ENCODE measurements at regions of chr10 and their contacts with region 1.

Region 1: DNA sequence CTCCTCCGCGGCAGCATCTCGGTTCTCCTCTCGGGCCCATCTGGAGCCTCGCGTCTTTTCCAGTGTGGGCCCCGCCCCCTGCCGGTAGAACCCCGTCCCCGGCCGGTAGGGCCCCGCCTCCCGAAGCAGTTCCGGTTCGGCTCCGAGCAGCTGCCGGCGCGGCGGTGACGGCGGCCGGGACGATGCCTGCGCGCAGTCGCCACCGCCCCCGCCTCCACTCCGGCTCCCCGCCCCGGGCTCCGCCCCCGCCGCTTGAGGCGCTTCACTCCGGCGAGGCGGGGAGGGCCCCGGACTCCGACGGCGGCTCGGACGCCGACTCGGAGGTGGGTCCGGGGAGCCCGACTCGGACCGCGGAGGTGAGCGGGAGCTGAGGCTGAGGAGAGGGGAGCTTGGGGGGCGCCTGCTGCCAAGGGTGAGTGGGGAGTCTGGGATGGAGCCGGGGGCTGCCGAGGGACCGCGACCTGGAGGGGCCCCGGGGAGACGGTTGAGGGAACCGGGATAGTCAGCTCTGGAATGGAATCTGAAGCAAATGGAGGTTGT is at the start of gene SAMD8:
- DNase-seq: peak; percentile 98
- ATAC-seq: peak; percentile 91
- total RNA-seq, gene SAMD8: 21.9 to 23.8 TPM

Region 2: GRCh38 chr10:74651565-74651964 is 459.9 kb before region 1 on chr10:
- intact Hi-C with region 1: no loop called
- DNase-seq: no peak
- ATAC-seq: no peak

Region 3: DNA sequence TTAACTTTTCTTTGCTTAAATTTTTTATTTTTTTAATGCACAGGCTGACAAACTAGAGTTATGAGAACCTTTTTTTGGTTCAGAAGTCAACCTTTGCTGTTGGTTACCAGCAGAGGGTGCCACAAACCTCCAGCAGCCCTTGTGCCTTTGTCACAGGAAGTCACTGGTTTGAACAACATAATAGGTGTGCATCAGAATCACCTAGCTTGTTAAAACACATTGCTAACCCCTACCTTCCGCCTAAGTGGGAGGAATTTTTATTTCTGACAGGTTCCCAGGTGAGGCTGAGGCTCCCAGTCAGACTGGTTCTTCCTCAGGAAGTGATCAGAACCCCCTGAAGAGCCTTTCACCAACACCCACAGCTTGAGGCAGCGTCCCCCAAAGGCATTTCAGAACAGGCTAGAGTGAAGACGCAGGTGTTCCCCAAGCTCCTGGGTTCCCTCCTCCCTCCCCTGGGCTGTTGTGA is 76.6 kb after region 1 on chr10:
- intact Hi-C with region 1: loop called in 1 of 2 experiments (anchors 10 kb)
- DNase-seq: peak; percentile 45
- ATAC-seq: peak; percentile 7 to 21

Measured in left cardiac atrium (tissue), 4 donors.